Ovary (tissue), 10 donors: ENCODE measurements at regions of chr18 and their contacts with region 1.

Region 1: GRCh38 chr18:52596748-52597435 is 256.9 kb downstream of the DCC start:
- DNase-seq: no peak
- H3K4me3 ChIP-seq: no peak overlapping the region
- H3K27ac ChIP-seq: no peak overlapping the region
- H3K4me1 ChIP-seq: no peaks in the 10 kb centered on the region
- H3K27me3 ChIP-seq: no peaks in the 10 kb centered on the region
- CTCF ChIP-seq: no peak
- EP300 ChIP-seq: no peak
- POLR2A ChIP-seq: no peak

Region 2: DNA sequence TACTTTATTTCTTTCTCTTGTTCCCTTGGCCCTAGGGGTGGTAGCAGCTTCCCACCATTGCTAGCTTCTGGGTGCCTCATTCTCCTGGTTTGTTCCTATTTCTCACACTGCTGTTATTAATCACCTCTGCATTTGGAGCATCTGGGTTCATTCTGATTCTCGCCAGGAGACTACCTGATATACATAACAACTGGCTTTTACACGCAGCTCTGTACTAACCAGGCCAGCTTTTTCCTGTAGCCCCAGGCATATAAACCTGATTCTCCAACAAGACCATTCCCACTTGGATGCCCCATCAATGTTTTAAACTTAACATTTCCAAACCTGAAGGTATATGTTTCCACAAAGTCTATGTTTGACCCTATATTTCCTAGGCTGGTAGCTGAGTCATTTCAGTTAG is 660.8 kb before region 1 on chr18:
- intact Hi-C with region 1: loop called in 1 of 4 experiments (anchors 5 kb)
- DNase-seq: no peak
- H3K4me3 ChIP-seq: no peak overlapping the region
- H3K27ac ChIP-seq: no peak overlapping the region
- H3K4me1 ChIP-seq: no peaks in the 10 kb centered on the region
- H3K27me3 ChIP-seq: no peaks in the 10 kb centered on the region
- CTCF ChIP-seq: no peak
- EP300 ChIP-seq: no peak
- POLR2A ChIP-seq: no peak

Region 3: GRCh38 chr18:52325997-52326396 is 270.9 kb before region 1 on chr18:
- intact Hi-C with region 1: no loop called
- DNase-seq: no peak
- H3K4me3 ChIP-seq: no peak overlapping the region
- H3K27ac ChIP-seq: no peak overlapping the region
- H3K4me1 ChIP-seq: no peaks in the 10 kb centered on the region
- H3K27me3 ChIP-seq: no peaks in the 10 kb centered on the region
- CTCF ChIP-seq: no peak
- EP300 ChIP-seq: no peak
- POLR2A ChIP-seq: no peak

Region 4: DNA sequence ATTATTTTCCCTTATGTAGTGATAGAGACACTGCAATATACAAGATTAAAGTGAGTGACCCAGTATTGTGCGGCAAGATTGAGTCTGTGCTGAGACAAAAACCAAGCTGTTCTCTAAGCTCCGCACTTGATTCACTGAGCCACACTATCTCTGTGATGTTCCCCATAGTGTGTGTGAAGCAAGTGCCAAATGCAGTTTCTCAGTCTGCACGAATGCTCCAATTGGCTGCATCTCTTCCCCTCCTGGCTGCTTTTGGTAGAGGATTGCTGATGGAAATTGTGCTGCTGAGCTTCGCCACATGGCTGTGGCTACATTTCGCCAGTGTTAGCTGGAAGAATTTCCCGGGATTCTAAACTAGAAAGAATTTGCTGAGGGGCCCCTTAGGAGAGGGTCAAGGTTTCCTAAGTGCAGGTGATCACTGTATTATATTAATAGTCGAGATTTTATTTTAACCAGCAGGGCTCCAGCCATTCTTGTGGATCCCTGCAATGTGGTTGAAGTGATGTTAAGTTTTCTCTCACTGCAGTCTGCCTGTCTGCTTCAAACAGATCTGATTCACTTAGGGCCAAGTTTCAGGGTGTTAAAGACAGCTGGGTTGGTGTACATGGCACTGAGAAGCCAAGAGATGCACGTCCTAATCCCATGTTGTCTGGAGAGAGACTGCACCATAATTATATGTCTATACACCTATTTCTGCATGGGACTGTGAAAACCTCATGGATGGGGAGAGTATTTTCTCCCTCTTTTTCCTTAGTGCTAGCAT is 60.3 kb after region 1 on chr18:
- intact Hi-C with region 1: no loop called
- DNase-seq: no peak
- H3K4me3 ChIP-seq: no peak overlapping the region
- H3K27ac ChIP-seq: no peak overlapping the region
- H3K4me1 ChIP-seq: no peaks in the 10 kb centered on the region
- H3K27me3 ChIP-seq: no peaks in the 10 kb centered on the region
- CTCF ChIP-seq: no peak
- EP300 ChIP-seq: no peak
- POLR2A ChIP-seq: no peak